Colonic mucosa (tissue), 4 donors: ENCODE measurements at regions of chr20 and their contacts with region 1.

Region 1: DNA sequence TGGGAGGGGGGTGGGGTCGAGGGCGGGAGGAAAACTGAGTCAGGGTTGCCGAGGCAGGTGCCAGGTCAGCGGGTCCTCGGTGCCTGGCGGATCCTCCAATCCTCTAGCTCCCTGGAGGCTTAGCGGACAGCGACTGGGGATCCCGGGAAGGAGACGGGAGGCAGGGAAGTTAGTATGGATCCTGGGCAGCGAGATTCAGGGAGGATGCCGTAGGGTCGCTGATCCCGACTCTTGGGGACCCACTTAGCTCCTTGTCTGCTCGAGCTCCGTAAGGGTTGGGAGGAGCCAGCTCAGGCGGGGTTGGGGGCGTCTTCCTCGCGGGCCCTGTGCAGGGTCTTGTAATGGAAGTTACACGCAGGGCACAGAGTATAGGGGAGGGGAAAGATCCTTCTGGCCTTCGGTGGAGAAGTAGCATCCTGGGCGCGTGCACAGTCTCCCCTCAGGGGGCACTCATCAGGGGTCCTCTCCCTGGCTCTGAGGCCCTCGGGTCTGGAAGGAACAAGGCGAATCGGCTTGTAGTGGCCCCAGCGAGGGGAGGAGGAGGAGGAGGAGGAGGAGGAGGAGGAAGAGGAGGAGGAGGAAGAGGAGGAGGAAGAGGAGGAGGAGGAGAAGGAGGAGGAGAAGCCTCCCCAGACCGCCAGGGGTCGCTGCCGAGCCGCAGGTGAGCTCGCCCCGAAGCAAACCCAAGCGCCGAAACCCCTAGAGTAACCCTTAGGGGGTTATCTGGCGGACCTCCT is 6.4 kb upstream of the SLC12A5 start:
- DNase-seq: peak; percentile 76
- H3K4me3 ChIP-seq: no peak overlapping the region
- H3K27ac ChIP-seq: no peak overlapping the region
- H3K4me1 ChIP-seq: no peaks in the 10 kb centered on the region
- H3K27me3 ChIP-seq: peaks cover 4% of the 10 kb centered on the region
- CTCF ChIP-seq: peak; percentile 59

Region 2: DNA sequence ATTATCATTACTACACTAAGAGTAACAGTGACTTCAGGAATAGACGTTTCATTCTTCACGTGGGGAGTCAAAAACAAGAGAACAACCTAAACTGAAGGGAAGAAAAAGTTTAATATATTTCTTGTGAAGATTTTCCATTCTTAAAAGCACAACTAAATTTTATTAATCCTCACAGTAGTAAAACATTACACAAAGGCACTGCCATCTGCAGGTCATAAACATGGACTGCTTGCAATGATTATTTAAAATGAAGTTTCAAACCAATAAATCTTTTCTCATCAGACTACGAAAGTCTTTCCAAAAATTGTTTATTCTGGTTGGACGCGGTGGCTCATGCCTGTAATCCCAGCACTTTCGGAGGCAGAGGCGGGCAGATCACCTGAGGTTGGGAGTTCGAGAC is 64.6 kb after region 1 on chr20:
- intact Hi-C with region 1: loop called (anchors 2 kb)
- DNase-seq: no peak
- H3K4me3 ChIP-seq: no peak overlapping the region
- H3K27ac ChIP-seq: peak overlapping the region; percentile 8
- H3K4me1 ChIP-seq: peaks cover 22% of the 10 kb centered on the region
- H3K27me3 ChIP-seq: no peaks in the 10 kb centered on the region
- CTCF ChIP-seq: no peak

Region 3: DNA sequence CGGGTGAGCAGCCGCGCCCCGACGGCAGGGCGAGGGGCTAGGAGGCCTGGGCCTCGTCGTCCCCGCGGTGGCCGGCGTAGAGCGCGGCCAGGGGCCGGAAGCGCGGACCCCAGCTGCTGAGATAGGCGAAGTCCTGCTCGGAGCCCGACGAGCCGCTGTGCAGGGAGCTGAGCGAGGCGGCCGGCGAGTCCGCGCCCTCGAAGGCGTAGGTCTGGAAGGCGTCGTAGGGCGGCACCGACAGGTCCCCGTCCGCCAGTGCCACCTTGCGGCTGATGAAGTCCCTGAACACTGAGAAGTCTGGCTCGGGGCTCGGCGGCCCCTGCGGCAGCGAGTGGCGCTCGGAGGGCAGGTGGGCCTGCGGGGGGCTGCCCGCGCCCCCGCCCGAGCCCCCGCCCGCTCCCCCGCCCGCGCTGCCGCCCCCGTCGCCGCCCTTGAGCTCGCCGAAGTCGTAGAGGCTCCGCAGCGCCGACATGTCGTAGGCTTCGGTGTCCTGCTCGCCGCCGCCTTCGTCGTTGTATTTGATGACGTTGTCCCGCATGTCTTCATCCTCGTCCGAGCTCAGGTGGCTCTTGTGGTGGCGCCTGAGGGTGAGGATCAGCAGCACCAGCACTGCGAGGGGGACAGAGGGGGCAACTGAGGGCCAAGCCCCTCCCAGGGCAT is 152.0 kb after region 1 on chr20:
- intact Hi-C with region 1: loop called (anchors 5 kb)
- DNase-seq: peak; percentile 70
- H3K4me3 ChIP-seq: no peak overlapping the region
- H3K27ac ChIP-seq: no peak overlapping the region
- H3K4me1 ChIP-seq: no peaks in the 10 kb centered on the region
- H3K27me3 ChIP-seq: peaks cover 24% of the 10 kb centered on the region
- CTCF ChIP-seq: peak; percentile 31

Region 4: GRCh38 chr20:46923550-46923949 is 901.0 kb after region 1 on chr20:
- intact Hi-C with region 1: no loop called
- DNase-seq: no peak
- H3K4me3 ChIP-seq: no peak overlapping the region
- H3K27ac ChIP-seq: no peak overlapping the region
- H3K4me1 ChIP-seq: no peaks in the 10 kb centered on the region
- H3K27me3 ChIP-seq: no peaks in the 10 kb centered on the region
- CTCF ChIP-seq: no peak